Adrenal gland (tissue), 19 donors: ENCODE measurements at regions of chr1 and their contacts with region 1.

Region 1: DNA sequence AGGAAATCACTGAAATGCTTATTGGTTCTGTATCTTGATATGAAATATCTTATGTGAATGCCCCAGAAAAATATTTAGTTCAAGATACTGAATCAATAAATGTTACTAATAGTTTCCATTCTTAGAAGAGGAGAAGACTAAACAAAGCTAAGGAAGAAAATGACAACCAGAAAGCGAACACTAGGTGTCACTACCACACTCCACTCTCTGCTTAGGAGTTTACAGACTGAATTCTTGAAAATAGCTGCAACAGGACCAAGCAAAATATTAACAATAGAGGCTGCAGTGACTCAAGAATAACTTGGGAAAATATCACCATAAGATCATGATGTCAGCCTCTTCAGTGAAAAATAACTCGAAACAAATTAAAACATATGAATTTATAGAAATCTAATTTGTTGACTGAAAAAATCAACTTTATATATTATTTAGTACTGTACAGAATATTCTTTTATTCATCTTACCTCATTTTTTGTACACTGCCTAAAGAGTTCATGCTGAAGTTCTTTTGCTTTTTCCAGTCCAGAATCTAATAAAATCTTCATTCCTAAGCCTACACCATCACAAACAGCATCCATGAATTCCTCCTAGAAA is 61.6 kb downstream of the KIF14 start:
- DNase-seq: peak in 3 of 7 donors; percentile 21 to 50 (median 39)
- H3K4me3 ChIP-seq: no peak overlapping the region
- H3K27ac ChIP-seq: no peak overlapping the region
- H3K4me1 ChIP-seq: no peaks in the 10 kb centered on the region
- H3K27me3 ChIP-seq: no peaks in the 10 kb centered on the region
- CTCF ChIP-seq: peak; percentile 47 to 69 (median 60)
- POLR2A ChIP-seq: no peak

Region 2: DNA sequence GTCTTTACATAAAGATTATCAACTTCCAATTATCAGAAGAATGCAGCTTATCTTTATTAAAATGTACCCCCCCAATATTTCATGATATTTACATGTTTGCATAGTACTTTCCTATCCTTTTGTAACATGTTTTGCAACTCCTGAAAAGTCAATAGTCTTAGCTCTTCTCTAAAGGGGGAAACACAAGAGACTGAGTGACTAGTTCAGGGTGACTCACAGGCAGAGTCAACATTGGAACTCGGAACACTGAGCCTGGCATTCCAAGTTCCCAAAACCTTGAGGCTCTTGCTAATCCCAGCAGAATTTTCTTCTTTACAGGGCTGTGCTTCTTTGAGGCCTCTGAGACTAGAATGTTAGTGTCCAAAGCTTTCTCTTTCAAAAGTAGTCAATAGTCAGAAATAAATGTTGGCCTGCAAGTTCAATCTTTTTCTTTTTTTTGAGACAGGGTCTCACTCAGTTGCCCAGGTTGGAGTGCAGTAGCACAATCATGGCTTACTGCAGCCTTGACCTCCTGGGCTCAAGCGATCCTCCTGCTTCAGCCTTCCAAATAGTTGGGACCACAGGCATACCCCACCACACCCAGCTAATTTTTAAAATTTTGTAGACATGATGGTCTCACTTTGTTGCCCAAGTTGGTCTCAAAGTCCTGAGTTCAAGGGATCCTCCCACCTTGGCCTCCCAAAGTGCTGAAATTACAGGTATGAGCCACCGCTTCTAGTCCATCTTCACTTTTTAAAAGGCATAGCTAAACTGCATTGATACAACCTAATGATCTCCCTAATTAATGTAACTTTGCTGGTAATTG is 186.7 kb before region 1 on chr1:
- intact Hi-C with region 1: no loop called
- DNase-seq: no peak
- H3K4me3 ChIP-seq: no peak overlapping the region
- H3K27ac ChIP-seq: no peak overlapping the region
- H3K4me1 ChIP-seq: no peaks in the 10 kb centered on the region
- H3K27me3 ChIP-seq: no peaks in the 10 kb centered on the region
- CTCF ChIP-seq: no peak
- POLR2A ChIP-seq: no peak

Region 3: GRCh38 chr1:200845360-200845759 is 286.4 kb after region 1 on chr1:
- intact Hi-C with region 1: loop called in 1 of 2 experiments (anchors 10 kb)
- DNase-seq: no peak
- H3K4me3 ChIP-seq: no peak overlapping the region
- H3K27ac ChIP-seq: no peak overlapping the region
- H3K4me1 ChIP-seq: no peaks in the 10 kb centered on the region
- H3K27me3 ChIP-seq: no peaks in the 10 kb centered on the region
- CTCF ChIP-seq: no peak
- POLR2A ChIP-seq: no peak

Region 4: DNA sequence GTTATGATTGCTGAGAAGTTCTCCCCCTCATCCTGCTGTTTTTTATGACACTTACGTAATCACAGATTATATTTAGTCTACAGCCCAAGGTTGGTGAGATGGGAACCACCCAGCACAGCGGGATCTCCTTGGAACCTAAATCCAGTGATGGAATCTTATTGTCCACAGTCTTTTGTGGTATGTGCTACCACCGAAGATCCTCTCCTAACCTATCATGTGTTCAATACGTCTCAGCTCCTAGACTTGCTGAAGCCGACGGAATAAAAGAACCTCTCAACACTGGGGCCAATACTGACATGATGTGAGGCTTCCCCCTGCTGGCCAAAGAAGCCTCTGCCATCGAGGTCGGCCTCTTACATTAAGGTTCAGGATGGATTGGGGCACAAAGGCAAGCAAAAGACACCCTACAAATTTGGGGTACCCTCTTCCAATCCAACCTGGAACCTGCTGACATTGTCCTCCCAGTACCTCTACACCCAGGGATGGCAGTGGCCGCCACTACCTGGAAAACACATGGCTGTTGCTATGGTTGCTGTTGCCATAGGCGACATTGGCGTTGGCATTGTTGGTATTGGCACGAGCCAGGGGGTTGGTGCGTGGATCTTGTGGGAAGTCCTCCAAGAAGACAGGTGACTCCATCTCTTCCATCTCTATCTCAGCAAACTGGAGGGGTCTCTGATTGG is 484.0 kb after region 1 on chr1:
- intact Hi-C with region 1: loop called in 1 of 2 experiments (anchors 5 kb)
- DNase-seq: peak; percentile 48 to 82 (median 68)
- H3K4me3 ChIP-seq: no peak overlapping the region
- H3K27ac ChIP-seq: no peak overlapping the region
- H3K4me1 ChIP-seq: peaks cover 0 to 5% of the 10 kb centered on the region in 2 donors
- H3K27me3 ChIP-seq: no peaks in the 10 kb centered on the region
- CTCF ChIP-seq: peak; percentile 57 to 90 (median 84)
- POLR2A ChIP-seq: no peak